ENCODE measurements at regions of chr11 and their contacts with region 1.

Region 1: GRCh38 chr11:101860696-101861427 is 53.9 kb upstream of the CEP126 start:
- DNase-seq: peak; percentile 37
- H3K4me3 Mint-ChIP-seq: no peak overlapping the region
- H3K27ac Mint-ChIP-seq: no peak overlapping the region
- H3K4me1 Mint-ChIP-seq: no peaks in the 10 kb centered on the region
- H3K27me3 Mint-ChIP-seq: peaks cover 8% of the 10 kb centered on the region

Region 2: GRCh38 chr11:101346591-101346990 is 514.3 kb before region 1 on chr11:
- CTCF ChIA-PET with region 1: no interaction called
- intact Hi-C with region 1: no loop called
- DNase-seq: no peak
- H3K4me3 Mint-ChIP-seq: no peak overlapping the region
- H3K27ac Mint-ChIP-seq: no peak overlapping the region
- H3K4me1 Mint-ChIP-seq: no peaks in the 10 kb centered on the region
- H3K27me3 Mint-ChIP-seq: no peaks in the 10 kb centered on the region

Region 3: DNA sequence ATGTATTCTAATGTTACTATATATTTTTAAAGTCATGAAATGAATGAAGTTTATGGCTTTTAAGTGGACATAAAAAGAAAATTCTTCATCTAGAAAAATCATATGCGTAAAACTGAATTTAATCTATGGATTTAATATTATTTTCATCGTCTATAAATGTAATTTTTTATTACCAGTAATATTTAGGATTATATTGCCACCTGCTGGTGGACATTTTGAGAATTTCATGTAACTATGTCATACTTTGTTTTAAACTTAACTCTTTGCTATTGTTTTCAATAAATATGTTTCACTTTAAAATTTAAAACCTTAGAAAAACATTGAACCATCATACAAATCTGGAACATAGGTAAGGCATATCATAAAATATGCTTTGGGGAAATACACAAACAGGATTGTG is 12.6 kb before region 1 on chr11:
- CTCF ChIA-PET with region 1: interaction called, 10 read pairs
- intact Hi-C with region 1: no loop called
- DNase-seq: no peak
- H3K4me3 Mint-ChIP-seq: no peak overlapping the region
- H3K27ac Mint-ChIP-seq: no peak overlapping the region
- H3K4me1 Mint-ChIP-seq: no peaks in the 10 kb centered on the region
- H3K27me3 Mint-ChIP-seq: peaks cover 8% of the 10 kb centered on the region

Region 4: DNA sequence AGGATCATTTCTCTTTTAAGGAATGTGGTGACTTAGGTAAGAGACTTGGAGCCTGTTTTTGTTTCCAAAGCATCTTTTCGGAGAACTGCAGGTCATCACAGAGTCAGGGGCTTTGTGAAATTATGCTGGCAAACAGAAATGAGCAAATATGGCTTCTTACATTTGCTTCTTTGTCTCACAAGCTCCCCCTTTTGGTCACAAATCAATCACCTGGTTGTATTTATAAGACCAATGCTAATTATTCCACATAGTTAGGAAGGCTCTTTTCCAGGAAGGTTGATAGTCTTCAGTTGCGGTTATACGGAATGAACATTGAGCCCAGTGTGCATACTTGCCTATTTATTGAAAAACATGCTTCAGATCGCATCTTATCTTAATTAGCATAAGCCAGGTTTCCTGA is 19.4 kb after region 1 on chr11:
- CTCF ChIA-PET with region 1: interaction called, 10 read pairs
- intact Hi-C with region 1: no loop called
- DNase-seq: no peak
- H3K4me3 Mint-ChIP-seq: no peak overlapping the region
- H3K27ac Mint-ChIP-seq: no peak overlapping the region
- H3K4me1 Mint-ChIP-seq: no peaks in the 10 kb centered on the region
- H3K27me3 Mint-ChIP-seq: peaks cover 12% of the 10 kb centered on the region

Region 5: GRCh38 chr11:101914738-101915426 is 54.0 kb after region 1 on chr11 and contains the start of gene CEP126:
- CTCF ChIA-PET with region 1: no interaction called
- intact Hi-C with region 1: loop called (anchors 2 kb)
- DNase-seq: peak; percentile 96
- H3K4me3 Mint-ChIP-seq: peak within 1 kb of the TSS; percentile 87
- H3K27ac Mint-ChIP-seq: peak within 1 kb of the TSS; percentile 72
- H3K4me1 Mint-ChIP-seq: peaks cover 19% of the 10 kb centered on the region
- H3K27me3 Mint-ChIP-seq: no peaks in the 10 kb centered on the region
- total RNA-seq, gene CEP126: 1.1 to 1.2 TPM

Measured in activated naive CD4-positive, alpha-beta T cell treated with anti-CD3 and anti-CD28 coated beads for 36 hours (primary cell).